ENCODE measurements at regions of chr7 and their contacts with region 1.

Region 1: GRCh38 chr7:114799628-114800028 is 122.3 kb upstream of the MDFIC start:
- DNase-seq: peak; percentile 26
- ATAC-seq: peak; percentile 67
- H3K4me3 Mint-ChIP-seq: no peak overlapping the region
- H3K27ac Mint-ChIP-seq: peak overlapping the region; percentile 83
- H3K4me1 Mint-ChIP-seq: peaks cover 57% of the 10 kb centered on the region
- H3K27me3 Mint-ChIP-seq: peaks cover 5% of the 10 kb centered on the region

Region 2: GRCh38 chr7:114819616-114820362 is 20.2 kb after region 1 on chr7:
- CTCF ChIA-PET with region 1: interaction called, 4 read pairs
- POLR2A ChIA-PET with region 1: no interaction called
- intact Hi-C with region 1: loop called (anchors 1 to 2 kb)
- DNase-seq: no peak
- ATAC-seq: no peak
- H3K4me3 Mint-ChIP-seq: no peak overlapping the region
- H3K27ac Mint-ChIP-seq: no peak overlapping the region
- H3K4me1 Mint-ChIP-seq: peaks cover 30% of the 10 kb centered on the region
- H3K27me3 Mint-ChIP-seq: no peaks in the 10 kb centered on the region

Region 3: DNA sequence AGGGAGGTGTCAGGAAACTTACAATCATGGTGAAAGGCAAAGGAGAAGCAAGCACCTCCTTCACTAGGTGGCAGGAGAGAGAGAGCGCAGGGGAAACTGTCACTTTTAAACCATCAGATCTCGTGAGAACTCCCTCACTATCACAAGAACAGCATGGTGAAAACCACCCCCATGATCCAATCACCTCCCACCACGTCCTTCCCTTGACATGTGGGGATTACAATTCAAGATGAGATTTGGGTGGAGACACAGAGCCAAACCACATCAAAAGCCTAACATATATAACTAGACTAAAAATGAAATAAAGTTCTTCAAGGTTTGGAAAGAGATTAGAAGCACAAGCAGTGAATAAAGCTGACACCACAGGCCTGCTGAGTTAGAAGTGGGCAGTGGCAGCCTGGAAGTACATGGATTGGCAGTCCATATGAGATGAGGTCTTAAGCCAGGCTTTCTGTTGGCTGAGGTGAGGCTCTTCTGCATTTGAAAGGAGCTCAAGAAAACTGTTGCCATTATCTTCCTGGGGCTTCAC is 25.9 kb after region 1 on chr7:
- CTCF ChIA-PET with region 1: interaction called, 4 read pairs
- POLR2A ChIA-PET with region 1: interaction called, 5 read pairs
- intact Hi-C with region 1: loop called in 1 of 2 experiments (anchors 1 kb)
- DNase-seq: peak; percentile 81
- ATAC-seq: peak; percentile 87
- H3K4me3 Mint-ChIP-seq: peak overlapping the region; percentile 11
- H3K27ac Mint-ChIP-seq: peak overlapping the region; percentile 92
- H3K4me1 Mint-ChIP-seq: peaks cover 31% of the 10 kb centered on the region
- H3K27me3 Mint-ChIP-seq: peaks cover 7% of the 10 kb centered on the region

Region 4: GRCh38 chr7:114916261-114916892 is 116.7 kb after region 1 on chr7:
- CTCF ChIA-PET with region 1: interaction called, 3 read pairs
- POLR2A ChIA-PET with region 1: no interaction called
- intact Hi-C with region 1: loop called (anchors 2 to 5 kb)
- DNase-seq: peak; percentile 74
- ATAC-seq: peak; percentile 91
- H3K4me3 Mint-ChIP-seq: peak overlapping the region; percentile 44
- H3K27ac Mint-ChIP-seq: peak overlapping the region; percentile 94
- H3K4me1 Mint-ChIP-seq: peaks cover 59% of the 10 kb centered on the region
- H3K27me3 Mint-ChIP-seq: no peaks in the 10 kb centered on the region

Measured in activated CD4-positive, alpha-beta T cell treated with anti-CD3 and anti-CD28 coated beads for 36 hours (primary cell).